Panc1 (cell line): ENCODE measurements at regions of chr22 and their contacts with region 1.

Region 1: GRCh38 chr22:23385291-23386244 is 194.5 kb downstream of the IGLL1 start:
- DNase-seq: peak; percentile 64
- ATAC-seq: peak; percentile 93
- H3K4me3 ChIP-seq: no peak overlapping the region
- H3K27ac ChIP-seq: no peak overlapping the region
- H3K4me1 ChIP-seq: no peaks in the 10 kb centered on the region
- H3K27me3 ChIP-seq: no peaks in the 10 kb centered on the region
- CTCF ChIP-seq: peak; percentile 93

Region 2: DNA sequence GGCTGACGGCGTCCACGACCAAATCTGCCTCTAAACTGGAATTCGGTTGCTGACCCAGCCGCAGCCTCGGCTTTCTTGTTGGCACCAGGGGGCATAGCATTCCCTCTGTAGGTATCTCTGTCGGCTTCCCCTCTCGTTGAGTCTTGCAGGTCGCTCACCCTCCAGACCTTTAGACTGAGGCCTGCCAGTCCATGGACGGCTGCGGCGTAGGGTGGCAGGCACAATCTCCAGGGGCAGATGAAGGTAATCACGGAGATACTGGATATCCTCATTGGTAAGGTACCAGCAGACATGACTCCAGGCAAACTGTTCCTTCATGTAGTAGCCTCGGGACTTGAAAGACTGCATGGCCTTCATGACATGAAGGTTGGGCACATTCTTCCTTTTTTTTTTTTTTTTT is 63.0 kb before region 1 on chr22:
- CTCF ChIA-PET with region 1: interaction called, 4 read pairs
- POLR2A ChIA-PET with region 1: no interaction called
- in situ Hi-C with region 1: no loop called
- intact Hi-C with region 1: loop called (anchors 5 kb)
- DNase-seq: no peak
- ATAC-seq: no peak
- H3K4me3 ChIP-seq: no peak overlapping the region
- H3K27ac ChIP-seq: no peak overlapping the region
- H3K4me1 ChIP-seq: no peaks in the 10 kb centered on the region
- H3K27me3 ChIP-seq: no peaks in the 10 kb centered on the region
- CTCF ChIP-seq: peak; percentile 27